MCF 10A (cell line): ENCODE measurements at regions of chr14 and their contacts with region 1.

Region 1: DNA sequence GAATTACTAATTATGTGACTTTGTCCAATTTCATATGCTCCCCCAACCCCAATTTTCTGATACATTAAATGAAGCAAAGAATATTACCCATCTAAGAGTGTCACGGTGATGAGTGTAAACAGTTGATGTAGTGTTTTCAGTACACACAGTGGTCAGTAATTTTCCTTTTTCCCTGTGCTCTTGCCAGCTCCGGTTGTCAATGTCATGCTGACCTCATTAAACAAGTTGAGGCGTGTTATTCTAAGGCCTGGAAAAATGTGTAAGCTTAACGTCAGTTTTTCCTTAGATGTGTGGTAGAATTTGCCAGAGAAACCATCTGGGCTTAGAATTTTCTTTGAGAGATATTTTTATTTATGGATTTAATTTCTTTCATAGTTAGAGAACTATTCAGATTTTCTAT is 11.7 kb upstream of the SERPINA6 start:
- DNase-seq: peak; percentile 77
- H3K4me3 Mint-ChIP-seq: no peak overlapping the region
- H3K27ac Mint-ChIP-seq: peak overlapping the region; percentile 90
- H3K4me1 Mint-ChIP-seq: peaks cover 23% of the 10 kb centered on the region
- H3K27me3 Mint-ChIP-seq: no peaks in the 10 kb centered on the region
- CTCF ChIP-seq: no peak

Region 2: GRCh38 chr14:94317259-94317658 is 17.6 kb before region 1 on chr14:
- CTCF ChIA-PET with region 1: interaction called, 3 read pairs
- POLR2A ChIA-PET with region 1: interaction called, 29 read pairs
- intact Hi-C with region 1: no loop called
- DNase-seq: peak; percentile 67
- H3K4me3 Mint-ChIP-seq: no peak overlapping the region
- H3K27ac Mint-ChIP-seq: no peak overlapping the region
- H3K4me1 Mint-ChIP-seq: peaks cover 32% of the 10 kb centered on the region
- H3K27me3 Mint-ChIP-seq: no peaks in the 10 kb centered on the region
- CTCF ChIP-seq: no peak

Region 3: DNA sequence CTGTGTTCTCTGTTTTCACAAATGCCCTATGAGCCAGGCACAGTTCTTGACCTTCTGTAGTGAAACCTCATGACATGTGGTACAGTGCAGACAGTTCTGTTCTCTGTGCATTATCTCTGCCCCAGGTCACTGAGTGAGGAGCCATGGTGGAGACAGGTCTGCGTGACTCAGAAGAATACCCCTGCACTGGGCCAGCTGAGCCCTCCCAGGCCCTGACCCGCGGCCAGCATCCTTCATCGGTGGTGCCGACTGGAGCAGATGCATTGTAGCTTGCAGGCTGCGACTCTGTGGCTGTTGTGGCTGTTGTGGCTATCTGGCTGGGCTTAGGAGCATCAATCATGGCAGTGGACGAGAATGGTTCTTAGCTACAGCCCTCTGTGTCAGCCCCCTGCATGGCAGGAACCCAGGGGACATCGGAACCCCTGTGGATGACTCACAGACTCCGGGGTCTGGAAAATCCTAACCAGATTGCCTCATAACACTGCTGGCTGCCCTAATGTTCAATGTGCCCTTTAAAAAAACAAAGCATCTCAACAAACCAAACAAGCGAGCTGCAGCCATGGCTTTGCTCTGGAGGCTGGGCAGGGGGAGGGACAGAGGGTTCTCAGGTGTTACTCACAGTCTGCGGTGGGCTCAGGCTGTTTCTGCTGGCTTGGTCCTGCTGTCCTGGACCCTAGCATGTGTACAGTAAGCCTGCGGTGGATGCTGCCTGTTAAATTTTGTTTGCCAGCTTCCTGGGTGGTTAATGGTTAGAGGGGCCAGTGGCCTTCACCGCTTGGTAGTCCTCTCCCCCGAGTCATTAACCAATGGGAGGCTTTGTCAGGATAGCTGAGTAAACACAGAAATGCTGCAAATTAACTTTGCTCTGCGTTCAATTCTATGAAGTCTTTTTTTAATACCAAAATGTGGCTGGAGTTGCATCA is 11.9 kb before region 1 on chr14 and contains the start of gene SERPINA6:
- CTCF ChIA-PET with region 1: interaction called, 3 read pairs
- POLR2A ChIA-PET with region 1: interaction called, 10 read pairs
- intact Hi-C with region 1: no loop called
- DNase-seq: no peak
- H3K4me3 Mint-ChIP-seq: no peak within 1 kb of the TSS
- H3K27ac Mint-ChIP-seq: no peak within 1 kb of the TSS
- H3K4me1 Mint-ChIP-seq: peaks cover 14% of the 10 kb centered on the region
- H3K27me3 Mint-ChIP-seq: no peaks in the 10 kb centered on the region
- CTCF ChIP-seq: no peak
- total RNA-seq, gene SERPINA6: not detected in 2 replicates

Region 4: DNA sequence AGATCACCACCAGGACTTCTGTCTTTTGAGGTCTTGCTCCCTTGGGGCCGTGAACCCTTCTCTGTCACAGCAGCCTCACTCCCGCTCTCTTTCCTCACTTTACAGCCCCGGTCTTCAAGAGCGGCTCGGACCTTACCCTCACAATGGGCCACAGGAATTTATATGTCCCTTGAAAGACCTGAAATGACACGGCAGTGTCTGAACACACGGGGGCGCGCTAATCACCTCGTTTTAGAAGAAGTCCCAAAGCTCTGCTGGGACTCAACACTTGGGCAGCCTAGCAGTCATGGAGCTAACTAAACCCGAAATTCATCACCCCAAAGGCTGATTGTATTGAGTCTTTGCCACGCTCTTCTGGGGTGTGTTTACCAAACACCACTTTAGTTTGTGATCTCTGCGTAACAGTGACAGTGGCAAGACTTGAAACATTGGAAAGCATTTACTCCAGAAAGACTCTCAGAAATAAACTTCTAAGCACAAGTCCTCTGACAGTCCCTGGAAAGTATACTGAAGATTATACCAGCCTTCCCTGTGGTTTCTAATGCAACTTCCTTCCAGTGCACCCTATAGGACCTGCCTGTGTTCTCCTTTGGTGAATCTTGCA is 88.7 kb after region 1 on chr14:
- CTCF ChIA-PET with region 1: no interaction called
- POLR2A ChIA-PET with region 1: no interaction called
- intact Hi-C with region 1: no loop called
- DNase-seq: peak; percentile 71
- H3K4me3 Mint-ChIP-seq: peak overlapping the region; percentile 22
- H3K27ac Mint-ChIP-seq: no peak overlapping the region
- H3K4me1 Mint-ChIP-seq: no peaks in the 10 kb centered on the region
- H3K27me3 Mint-ChIP-seq: no peaks in the 10 kb centered on the region
- CTCF ChIP-seq: peak; percentile 32